ENCODE measurements at regions of chr9 and their contacts with region 1.

Region 1: DNA sequence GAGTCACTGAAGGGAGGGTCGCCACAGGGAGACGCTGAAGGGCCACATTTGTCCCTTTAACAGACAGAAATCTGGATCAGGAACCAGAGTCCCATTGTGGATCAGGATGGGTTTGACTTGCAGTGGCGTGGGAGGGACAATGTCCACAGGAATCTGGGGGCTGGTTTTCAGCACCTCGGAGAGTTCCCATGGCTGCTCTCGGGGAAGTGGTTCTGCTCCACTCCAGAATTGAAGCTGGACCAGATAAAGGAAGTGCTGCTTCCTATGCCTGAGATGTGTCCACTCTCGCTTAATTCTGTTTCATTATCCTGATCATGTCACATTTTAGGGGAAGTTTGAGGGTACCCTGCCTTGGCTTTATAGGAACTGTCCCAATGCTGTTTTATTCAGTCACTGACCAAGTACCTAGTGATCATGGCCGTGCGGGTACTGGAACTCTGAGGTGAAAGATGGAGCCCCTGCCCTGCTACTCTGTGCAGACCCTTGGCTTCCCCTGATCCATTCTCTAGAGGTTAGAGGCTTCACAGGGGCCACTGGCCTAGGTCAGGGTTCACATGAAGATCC is 28.7 kb downstream of the ENHO start:
- DNase-seq: no peak
- ATAC-seq: peak; percentile 72
- H3K4me3 ChIP-seq: no peak overlapping the region
- H3K27ac ChIP-seq: no peak overlapping the region
- H3K4me1 ChIP-seq: no peaks in the 10 kb centered on the region
- H3K27me3 ChIP-seq: peaks cover 3% of the 10 kb centered on the region
- CTCF ChIP-seq: no peak

Region 2: GRCh38 chr9:34446468-34446891 is 47.6 kb before region 1 on chr9:
- intact Hi-C with region 1: loop called (anchors 10 kb)
- DNase-seq: no peak
- ATAC-seq: no peak
- H3K4me3 ChIP-seq: no peak overlapping the region
- H3K27ac ChIP-seq: no peak overlapping the region
- H3K4me1 ChIP-seq: peaks cover 11% of the 10 kb centered on the region
- H3K27me3 ChIP-seq: no peaks in the 10 kb centered on the region
- CTCF ChIP-seq: no peak

Region 3: GRCh38 chr9:34665381-34666250 is 171.6 kb after region 1 on chr9:
- intact Hi-C with region 1: no loop called
- DNase-seq: peak; percentile 97
- ATAC-seq: peak; percentile 93
- H3K4me3 ChIP-seq: peak overlapping the region; percentile 73
- H3K27ac ChIP-seq: peak overlapping the region; percentile 96
- H3K4me1 ChIP-seq: peaks cover 15% of the 10 kb centered on the region
- H3K27me3 ChIP-seq: no peaks in the 10 kb centered on the region
- CTCF ChIP-seq: no peak

Region 4: GRCh38 chr9:35322075-35322885 is 828.2 kb after region 1 on chr9:
- intact Hi-C with region 1: no loop called
- DNase-seq: no peak
- ATAC-seq: no peak
- H3K4me3 ChIP-seq: no peak overlapping the region
- H3K27ac ChIP-seq: no peak overlapping the region
- H3K4me1 ChIP-seq: no peaks in the 10 kb centered on the region
- H3K27me3 ChIP-seq: no peaks in the 10 kb centered on the region
- CTCF ChIP-seq: no peak